Prostate gland (tissue), 2 donors: ENCODE measurements at regions of chr3 and their contacts with region 1.

Region 1: DNA sequence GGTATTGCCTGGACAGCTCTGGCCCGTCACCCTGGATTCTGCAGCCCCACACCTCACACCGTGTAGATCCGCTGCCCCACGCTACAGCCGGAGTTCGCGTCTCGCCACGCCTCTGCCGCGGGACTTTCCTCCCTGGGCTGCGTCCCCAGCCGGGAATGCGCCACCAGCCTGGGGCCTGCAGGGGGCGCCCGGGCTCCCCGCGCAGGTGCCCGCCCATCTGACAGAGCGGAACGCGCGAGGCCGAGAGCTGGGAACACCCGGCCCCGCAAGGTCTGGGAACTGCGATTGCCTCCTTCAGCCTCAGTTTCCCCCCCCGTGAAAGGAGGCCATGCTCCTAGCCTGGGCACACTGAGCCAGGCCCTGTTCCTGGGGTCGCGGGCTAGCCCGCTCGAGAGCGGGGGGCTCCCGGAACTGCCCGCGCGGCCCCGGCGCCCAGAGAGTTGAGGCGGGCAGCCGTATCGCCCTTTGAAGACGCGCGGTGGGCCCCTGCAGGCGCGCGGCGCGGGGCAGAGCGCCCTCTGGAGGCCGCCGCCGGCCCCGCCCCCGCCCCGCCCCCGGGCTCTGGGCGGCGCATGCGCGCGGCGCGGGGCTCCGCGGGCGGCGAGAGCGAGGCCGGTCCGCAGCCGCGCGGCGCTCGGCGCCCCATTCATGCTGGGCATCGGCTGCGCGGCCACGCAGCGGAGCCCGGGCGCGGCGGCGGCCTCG is at the start of gene PLXNA1:
- DNase-seq: peak; percentile 42
- H3K4me3 ChIP-seq: peak within 1 kb of the TSS; percentile 64 to 71
- H3K27ac ChIP-seq: peak within 1 kb of the TSS; percentile 13 to 26
- H3K4me1 ChIP-seq: peaks cover 5% of the 10 kb centered on the region
- H3K27me3 ChIP-seq: no peaks in the 10 kb centered on the region
- CTCF ChIP-seq: peak; percentile 71 to 86 (median 76)
- POLR2A ChIP-seq: no peak
- total RNA-seq, gene PLXNA1: 17.0 to 49.5 TPM

Region 2: GRCh38 chr3:126679318-126679751 is 303.3 kb before region 1 on chr3:
- intact Hi-C with region 1: loop called (anchors 5 kb)
- DNase-seq: peak; percentile 73
- H3K4me3 ChIP-seq: no peak overlapping the region
- H3K27ac ChIP-seq: no peak overlapping the region
- H3K4me1 ChIP-seq: peaks cover 5% of the 10 kb centered on the region
- H3K27me3 ChIP-seq: peaks cover 5% of the 10 kb centered on the region
- CTCF ChIP-seq: peak; percentile 90 to 94 (median 93)
- POLR2A ChIP-seq: no peak

Region 3: DNA sequence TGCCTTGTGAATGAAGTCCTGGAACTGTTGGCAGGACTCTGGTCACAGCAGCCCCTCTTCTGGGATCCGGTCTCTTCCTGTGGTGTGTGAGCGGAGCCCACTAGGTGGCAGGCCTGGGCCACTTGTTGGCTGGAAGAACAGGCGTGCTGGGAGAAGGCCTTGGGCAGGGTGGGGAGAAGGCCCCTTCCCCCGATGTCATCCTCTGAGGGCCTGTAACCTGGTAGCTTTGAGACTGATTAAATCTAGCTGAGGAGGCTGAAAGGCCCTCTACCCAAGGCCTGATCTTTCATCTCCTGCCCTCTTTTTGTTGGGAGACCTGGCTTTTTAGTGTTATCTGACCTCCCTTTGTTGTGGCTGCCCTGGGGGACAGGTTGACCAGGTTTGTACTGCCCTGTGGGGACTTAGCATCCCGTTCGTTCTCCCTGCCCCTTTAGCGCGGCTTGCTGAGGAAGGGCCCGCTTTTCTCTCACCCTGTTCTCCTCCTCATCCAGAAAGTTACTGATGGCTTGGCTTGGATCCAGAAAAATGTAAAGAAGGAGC is 230.2 kb before region 1 on chr3:
- intact Hi-C with region 1: loop called (anchors 2 kb)
- DNase-seq: peak; percentile 74
- H3K4me3 ChIP-seq: no peak overlapping the region
- H3K27ac ChIP-seq: peak overlapping the region; percentile 58 to 61
- H3K4me1 ChIP-seq: no peaks in the 10 kb centered on the region
- H3K27me3 ChIP-seq: no peaks in the 10 kb centered on the region
- CTCF ChIP-seq: peak; percentile 43 to 91 (median 84)
- POLR2A ChIP-seq: no peak

Region 4: DNA sequence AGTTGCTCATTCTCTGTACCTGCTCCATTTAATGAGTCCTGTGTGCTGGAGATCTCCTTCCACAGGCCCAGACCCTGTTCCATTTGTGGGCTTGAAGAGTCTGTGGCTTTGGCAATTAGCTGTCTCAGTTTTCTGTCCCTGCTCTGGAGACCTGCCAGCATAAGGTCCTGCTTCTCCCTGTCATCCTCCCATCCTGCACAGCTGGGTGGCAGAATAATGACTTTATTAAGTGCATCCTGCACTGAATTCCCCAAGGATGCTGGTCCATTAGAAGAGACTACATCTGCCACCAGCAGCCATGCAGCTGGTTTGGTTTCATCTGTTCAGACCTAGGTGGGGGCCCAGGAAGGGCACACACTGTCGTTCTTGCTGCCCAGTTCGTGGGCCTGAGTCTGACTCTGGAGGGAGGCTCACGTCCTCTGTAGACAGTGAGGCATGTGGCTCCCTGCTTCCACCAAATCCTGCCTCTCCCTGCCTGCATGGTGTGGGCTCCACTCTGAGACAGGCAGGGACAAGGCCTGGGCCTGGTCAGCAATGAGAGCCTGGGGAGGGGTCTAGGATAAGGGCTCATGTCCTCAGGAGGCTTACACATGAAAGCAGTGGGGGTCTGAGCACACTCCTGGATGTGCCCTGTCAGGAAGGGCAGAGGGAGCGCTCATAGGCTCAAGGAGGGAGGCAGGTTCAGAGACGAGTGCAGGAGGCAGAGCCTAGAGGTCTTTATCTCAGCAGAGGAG is 131.9 kb after region 1 on chr3:
- intact Hi-C with region 1: no loop called
- DNase-seq: no peak
- H3K4me3 ChIP-seq: no peak overlapping the region
- H3K27ac ChIP-seq: no peak overlapping the region
- H3K4me1 ChIP-seq: no peaks in the 10 kb centered on the region
- H3K27me3 ChIP-seq: no peaks in the 10 kb centered on the region
- CTCF ChIP-seq: no peak
- POLR2A ChIP-seq: no peak

Region 5: DNA sequence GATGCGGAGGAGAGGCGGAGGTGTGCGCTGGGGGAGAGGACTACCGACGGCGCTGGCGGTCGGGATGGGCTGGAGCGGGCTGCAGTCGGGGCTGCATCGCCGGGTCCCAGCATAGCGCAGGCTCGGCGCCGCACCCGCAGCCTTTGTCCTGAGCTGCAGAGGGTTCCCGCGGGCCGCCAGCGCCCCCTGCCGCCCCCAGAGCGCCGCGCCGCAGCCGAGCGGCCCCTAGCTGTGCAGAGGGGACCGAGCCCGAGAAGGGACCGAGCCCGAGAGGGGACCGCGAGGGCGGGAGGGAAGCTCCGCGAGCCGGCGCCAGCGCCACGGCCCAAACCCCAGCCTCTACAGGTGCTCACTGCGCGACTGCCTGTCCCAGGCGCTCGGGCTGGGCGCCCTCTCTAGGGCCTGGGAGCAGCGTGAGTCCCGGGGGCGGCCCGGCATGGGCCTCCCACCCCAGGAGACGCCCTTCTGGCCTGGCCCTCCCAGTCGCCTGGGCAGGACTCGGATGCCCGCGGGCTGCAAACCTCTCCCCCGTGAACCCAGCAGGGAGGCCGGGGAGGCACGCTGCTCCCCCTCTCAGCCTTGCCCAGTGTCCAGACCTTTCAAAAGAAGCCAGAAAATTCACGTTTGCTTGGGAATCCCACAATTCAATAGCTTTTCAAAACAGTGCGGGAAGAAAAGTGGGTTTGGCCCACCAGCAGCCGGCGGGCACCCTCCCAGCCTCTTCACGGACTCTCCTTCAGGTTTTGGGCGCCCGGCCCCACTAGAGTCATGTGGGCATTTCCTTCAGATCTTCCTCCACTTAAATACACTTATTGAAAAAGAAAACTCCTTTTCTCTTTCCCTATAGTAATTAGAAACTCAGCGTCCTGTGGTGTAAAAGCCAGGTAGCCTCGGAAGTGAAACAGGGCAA is 473.2 kb after region 1 on chr3:
- intact Hi-C with region 1: loop called (anchors 2 kb)
- DNase-seq: peak; percentile 47
- H3K4me3 ChIP-seq: no peak overlapping the region
- H3K27ac ChIP-seq: no peak overlapping the region
- H3K4me1 ChIP-seq: peaks cover 13% of the 10 kb centered on the region
- H3K27me3 ChIP-seq: peaks cover 25% of the 10 kb centered on the region
- CTCF ChIP-seq: peak; percentile 63 to 97 (median 86)
- POLR2A ChIP-seq: no peak

Region 6: DNA sequence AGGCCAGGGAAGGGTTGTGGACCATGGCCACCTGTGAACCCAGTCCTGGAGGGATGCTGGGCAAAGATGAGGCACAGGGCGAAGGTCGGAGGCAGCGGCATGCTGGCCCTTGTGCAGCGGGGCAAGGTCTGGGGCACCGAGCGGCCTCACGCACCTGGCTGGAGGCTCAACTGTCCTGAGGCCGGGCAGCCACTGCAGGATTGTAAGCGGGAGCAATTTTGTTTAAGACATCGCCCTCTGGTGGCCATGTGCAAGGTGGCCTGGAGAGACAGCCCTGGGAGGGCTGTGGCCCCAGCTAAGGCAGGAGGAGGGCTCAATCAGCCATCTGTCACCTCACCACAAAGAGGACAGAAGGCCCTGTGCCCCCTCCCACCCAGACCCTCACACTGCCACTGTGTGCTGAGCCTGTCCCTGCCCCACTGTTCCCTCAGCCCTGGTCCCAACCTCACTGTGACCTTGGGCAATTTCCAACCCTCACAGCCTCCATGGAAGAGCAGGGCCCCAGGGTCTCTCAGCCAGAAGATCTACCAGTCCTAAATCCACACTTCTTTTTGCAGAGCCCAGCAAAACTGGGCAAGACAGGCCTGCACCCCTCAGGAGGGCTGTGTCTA is 561.7 kb after region 1 on chr3:
- intact Hi-C with region 1: loop called (anchors 10 kb)
- DNase-seq: peak; percentile 72
- H3K4me3 ChIP-seq: no peak overlapping the region
- H3K27ac ChIP-seq: no peak overlapping the region
- H3K4me1 ChIP-seq: peaks cover 13% of the 10 kb centered on the region
- H3K27me3 ChIP-seq: no peaks in the 10 kb centered on the region
- CTCF ChIP-seq: peak; percentile 62 to 81 (median 73)
- POLR2A ChIP-seq: no peak